Caco-2 (cell line): ENCODE measurements at regions of chr4 and their contacts with region 1.

Region 1: DNA sequence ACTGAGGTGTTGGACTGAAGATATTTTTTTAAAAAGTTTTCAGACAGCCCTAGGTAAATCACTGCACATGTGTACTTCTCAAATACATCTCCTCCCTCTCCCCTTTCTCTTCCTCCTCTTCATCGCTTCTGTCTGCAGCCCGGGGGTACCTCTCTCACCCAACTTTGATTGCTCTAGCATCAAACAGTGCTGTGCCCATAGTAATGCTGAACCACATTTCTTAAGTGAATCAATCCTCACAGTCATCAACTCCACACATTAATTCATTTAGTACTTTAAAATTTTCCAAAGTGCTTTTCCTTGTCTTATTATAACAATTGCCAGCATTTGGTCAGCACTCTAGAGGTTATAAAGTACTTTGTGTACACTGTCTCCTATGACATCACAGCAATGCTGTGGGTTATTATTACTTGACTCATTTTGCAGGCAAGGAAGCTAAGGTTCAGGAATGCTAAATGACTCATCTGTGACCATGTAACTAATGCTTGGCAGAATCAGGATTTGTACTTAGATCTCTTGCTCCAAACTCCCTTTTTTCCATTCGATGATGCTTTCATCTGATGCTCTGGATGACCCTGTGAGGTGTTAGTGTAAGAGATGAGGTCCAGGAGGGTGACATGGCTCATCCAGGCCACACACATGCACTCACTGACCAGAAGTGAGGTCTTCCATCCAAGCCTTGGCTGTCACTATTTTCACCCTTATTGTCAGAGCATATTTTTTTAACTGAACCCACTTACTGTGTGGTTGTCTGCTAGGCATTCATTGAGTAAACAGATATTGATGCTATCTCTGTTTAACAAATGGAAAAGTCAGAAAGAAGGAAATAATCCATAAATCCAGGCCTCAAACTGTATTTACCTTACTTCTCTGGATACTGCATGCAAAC is 58.8 kb downstream of the RHOH start:
- DNase-seq: peak in 1 of 2 experiments; percentile 16
- H3K4me3 ChIP-seq: no peak overlapping the region
- H3K4me3 Mint-ChIP-seq: no peak overlapping the region
- H3K27ac Mint-ChIP-seq: peak overlapping the region; percentile 14
- H3K4me1 ChIP-seq: peaks cover 28% of the 10 kb centered on the region
- H3K4me1 Mint-ChIP-seq: peaks cover 26% of the 10 kb centered on the region
- H3K27me3 ChIP-seq: no peaks in the 10 kb centered on the region
- H3K27me3 Mint-ChIP-seq: no peaks in the 10 kb centered on the region
- CTCF ChIP-seq: no peak

Region 2: GRCh38 chr4:40228497-40229365 is 26.9 kb before region 1 on chr4:
- CTCF ChIA-PET with region 1: no interaction called
- POLR2A ChIA-PET with region 1: no interaction called
- intact Hi-C with region 1: no loop called
- DNase-seq: peak in 1 of 2 experiments; percentile 15
- H3K4me3 ChIP-seq: no peak overlapping the region
- H3K4me3 Mint-ChIP-seq: no peak overlapping the region
- H3K27ac Mint-ChIP-seq: no peak overlapping the region
- H3K4me1 ChIP-seq: no peaks in the 10 kb centered on the region
- H3K4me1 Mint-ChIP-seq: no peaks in the 10 kb centered on the region
- H3K27me3 ChIP-seq: no peaks in the 10 kb centered on the region
- H3K27me3 Mint-ChIP-seq: no peaks in the 10 kb centered on the region
- CTCF ChIP-seq: peak in 1 of 2 experiments; percentile 33

Region 3: DNA sequence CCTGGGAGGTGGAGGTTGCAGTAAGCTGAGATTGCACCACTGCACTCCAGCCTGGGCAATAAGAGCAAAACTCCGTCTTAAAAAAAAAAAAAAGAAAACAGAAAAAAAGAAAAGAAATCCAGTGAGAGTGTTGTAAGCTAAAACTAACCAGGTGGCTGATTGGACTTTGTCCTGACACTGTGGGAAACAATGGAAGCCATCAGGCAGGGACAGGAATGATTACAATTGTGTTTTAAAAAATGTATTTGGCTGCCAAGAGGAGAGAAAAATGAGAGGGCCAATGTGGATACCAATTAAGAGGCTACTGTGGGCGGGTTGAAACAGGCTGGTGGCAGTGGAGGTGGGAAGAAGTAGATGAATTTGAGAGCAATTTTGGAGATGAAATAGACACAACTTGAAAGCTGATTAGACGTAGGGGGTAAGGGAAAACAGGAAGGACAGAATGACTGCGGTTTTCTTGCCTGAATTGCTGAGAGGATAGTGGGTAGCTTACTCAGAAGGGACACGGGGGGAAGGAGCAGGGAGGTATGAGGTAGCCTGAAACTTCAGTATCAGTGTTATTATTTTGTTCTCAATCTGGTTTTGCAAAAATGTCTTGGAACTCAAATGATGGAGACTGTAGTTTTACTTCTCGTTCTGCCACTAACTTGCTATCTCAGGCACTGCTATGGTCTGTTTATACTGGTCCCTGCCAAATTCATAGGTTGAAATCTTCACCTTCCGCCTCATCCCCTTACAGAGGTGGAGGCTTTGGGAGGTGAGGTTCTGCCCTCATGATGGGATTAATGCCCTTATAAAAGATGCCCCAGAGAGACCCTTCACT is 33.9 kb after region 1 on chr4:
- CTCF ChIA-PET with region 1: no interaction called
- POLR2A ChIA-PET with region 1: interaction called, 14 read pairs
- intact Hi-C with region 1: no loop called
- DNase-seq: no peak
- H3K4me3 ChIP-seq: no peak overlapping the region
- H3K4me3 Mint-ChIP-seq: no peak overlapping the region
- H3K27ac Mint-ChIP-seq: peak overlapping the region; percentile 26
- H3K4me1 ChIP-seq: 0 out of 2 replicates have a peak, but pooled peaks cover 6% of the 10 kb centered on the region
- H3K4me1 Mint-ChIP-seq: peaks cover 9% of the 10 kb centered on the region
- H3K27me3 ChIP-seq: no peaks in the 10 kb centered on the region
- H3K27me3 Mint-ChIP-seq: no peaks in the 10 kb centered on the region
- CTCF ChIP-seq: no peak

Region 4: DNA sequence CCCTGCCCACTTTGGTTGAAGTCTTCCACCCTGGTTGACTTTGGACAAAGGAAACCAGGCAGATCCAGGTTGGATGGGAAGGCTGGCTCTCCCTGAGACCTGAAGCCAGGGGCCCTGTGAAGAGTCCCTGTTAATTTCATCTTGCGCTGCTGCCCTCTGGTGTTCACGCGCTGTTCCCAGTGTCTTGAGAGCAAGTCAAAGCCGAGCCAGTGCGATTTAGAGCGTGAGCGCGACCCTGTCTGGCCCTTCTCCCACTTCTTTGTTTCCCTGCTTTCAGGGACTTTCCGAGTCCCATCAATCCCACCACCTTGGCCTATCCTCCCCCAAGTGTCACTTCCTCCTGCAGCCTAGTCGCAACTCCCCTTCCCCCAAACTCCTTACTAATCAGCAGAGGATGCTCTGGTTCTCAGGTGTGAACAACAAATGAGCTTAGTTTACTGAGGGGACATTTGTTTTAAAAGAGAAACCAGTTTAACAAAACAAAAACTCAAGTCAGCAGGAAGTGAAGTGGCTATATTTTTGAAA is 53.7 kb after region 1 on chr4:
- CTCF ChIA-PET with region 1: no interaction called
- POLR2A ChIA-PET with region 1: no interaction called
- intact Hi-C with region 1: loop called (anchors 2 kb)
- DNase-seq: peak; percentile 84 to 86
- H3K4me3 ChIP-seq: no peak overlapping the region
- H3K4me3 Mint-ChIP-seq: peak overlapping the region; percentile 41
- H3K27ac Mint-ChIP-seq: no peak overlapping the region
- H3K4me1 ChIP-seq: peaks cover 13% of the 10 kb centered on the region
- H3K4me1 Mint-ChIP-seq: peaks cover 18% of the 10 kb centered on the region
- H3K27me3 ChIP-seq: no peaks in the 10 kb centered on the region
- H3K27me3 Mint-ChIP-seq: no peaks in the 10 kb centered on the region
- CTCF ChIP-seq: peak; percentile 78 to 83